PC-9 (cell line): ENCODE measurements at regions of chr5 and their contacts with region 1.

Region 1: GRCh38 chr5:32312647-32313523 is at the start of gene MTMR12:
- DNase-seq: peak; percentile 99 to 100
- H3K4me3 ChIP-seq: peak within 1 kb of the TSS; percentile 91
- H3K27ac ChIP-seq: peak within 1 kb of the TSS; percentile 14
- H3K4me1 ChIP-seq: peaks cover 10% of the 10 kb centered on the region
- H3K27me3 ChIP-seq: no peaks in the 10 kb centered on the region
- CTCF ChIP-seq: no peak
- total RNA-seq, gene MTMR12: 44.5 and 47.5 TPM in 2 replicates

Region 2: GRCh38 chr5:32444431-32445286 is 131.8 kb after region 1 on chr5 and contains the start of gene ZFR:
- CTCF ChIA-PET with region 1: no interaction called
- POLR2A ChIA-PET with region 1: no interaction called
- intact Hi-C with region 1: loop called (anchors 2 kb)
- DNase-seq: peak; percentile 77 to 98
- H3K4me3 ChIP-seq: peak within 1 kb of the TSS; percentile 83
- H3K27ac ChIP-seq: peak within 1 kb of the TSS; percentile 61
- H3K4me1 ChIP-seq: peaks cover 40% of the 10 kb centered on the region
- H3K27me3 ChIP-seq: no peaks in the 10 kb centered on the region
- CTCF ChIP-seq: no peak
- total RNA-seq, gene ZFR: 51.8 and 69.2 TPM in 2 replicates

Region 3: DNA sequence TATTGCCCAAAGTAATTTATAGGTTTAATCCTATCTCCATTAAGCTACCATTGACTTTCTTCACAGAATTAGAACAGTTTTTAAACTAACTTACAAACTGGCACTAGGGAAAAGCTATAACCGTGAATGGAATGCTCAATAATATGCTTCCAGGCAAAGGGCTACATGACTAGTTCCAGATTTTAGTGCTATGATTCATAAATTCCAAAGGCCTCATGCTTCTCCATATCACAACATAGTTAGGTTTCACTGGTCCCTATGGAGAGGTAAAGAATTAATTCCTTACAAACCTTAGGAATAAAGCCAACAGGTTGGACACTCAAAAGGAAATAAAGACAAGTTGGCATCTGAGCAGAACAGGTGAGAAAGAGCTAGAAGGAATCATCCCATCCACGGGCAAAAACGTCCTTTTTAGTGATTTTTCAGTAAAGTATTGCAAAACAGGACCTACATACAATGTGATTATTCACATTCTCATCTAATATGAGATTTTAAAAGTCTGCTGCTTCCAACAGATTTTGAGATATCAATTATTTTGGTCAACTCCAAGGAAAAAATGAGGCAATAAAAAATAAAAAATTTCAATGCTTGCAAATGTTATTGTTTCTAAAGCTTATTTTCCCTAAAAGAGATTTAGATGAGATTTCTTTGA is 1030.9 kb after region 1 on chr5:
- CTCF ChIA-PET with region 1: no interaction called
- POLR2A ChIA-PET with region 1: interaction called, 39 read pairs
- intact Hi-C with region 1: no loop called
- DNase-seq: peak in 1 of 2 experiments; percentile 56
- H3K4me3 ChIP-seq: no peak overlapping the region
- H3K27ac ChIP-seq: no peak overlapping the region
- H3K4me1 ChIP-seq: 0 out of 2 replicates have a peak, but pooled peaks cover 8% of the 10 kb centered on the region
- H3K27me3 ChIP-seq: no peaks in the 10 kb centered on the region
- CTCF ChIP-seq: no peak